ENCODE measurements at regions of chr1 and their contacts with region 1.

Region 1: GRCh38 chr1:111227851-111228747 is 586 bp downstream of the CHI3L2 start:
- DNase-seq: peak in 1 of 9 experiments; percentile 23
- ATAC-seq: no peak
- H3K4me3 ChIP-seq: peak overlapping the region in 1 of 2 experiments; percentile 5
- H3K4me3 Mint-ChIP-seq: peak overlapping the region; percentile 22
- H3K27ac ChIP-seq: peak overlapping the region; percentile 4 to 79
- H3K27ac Mint-ChIP-seq: peak overlapping the region; percentile 89
- H3K4me1 ChIP-seq: peaks cover 73% of the 10 kb centered on the region
- H3K4me1 Mint-ChIP-seq: peaks cover 81% of the 10 kb centered on the region
- H3K27me3 ChIP-seq: no peaks in the 10 kb centered on the region
- H3K27me3 Mint-ChIP-seq: no peaks in the 10 kb centered on the region
- CTCF ChIP-seq: no peak

Region 2: DNA sequence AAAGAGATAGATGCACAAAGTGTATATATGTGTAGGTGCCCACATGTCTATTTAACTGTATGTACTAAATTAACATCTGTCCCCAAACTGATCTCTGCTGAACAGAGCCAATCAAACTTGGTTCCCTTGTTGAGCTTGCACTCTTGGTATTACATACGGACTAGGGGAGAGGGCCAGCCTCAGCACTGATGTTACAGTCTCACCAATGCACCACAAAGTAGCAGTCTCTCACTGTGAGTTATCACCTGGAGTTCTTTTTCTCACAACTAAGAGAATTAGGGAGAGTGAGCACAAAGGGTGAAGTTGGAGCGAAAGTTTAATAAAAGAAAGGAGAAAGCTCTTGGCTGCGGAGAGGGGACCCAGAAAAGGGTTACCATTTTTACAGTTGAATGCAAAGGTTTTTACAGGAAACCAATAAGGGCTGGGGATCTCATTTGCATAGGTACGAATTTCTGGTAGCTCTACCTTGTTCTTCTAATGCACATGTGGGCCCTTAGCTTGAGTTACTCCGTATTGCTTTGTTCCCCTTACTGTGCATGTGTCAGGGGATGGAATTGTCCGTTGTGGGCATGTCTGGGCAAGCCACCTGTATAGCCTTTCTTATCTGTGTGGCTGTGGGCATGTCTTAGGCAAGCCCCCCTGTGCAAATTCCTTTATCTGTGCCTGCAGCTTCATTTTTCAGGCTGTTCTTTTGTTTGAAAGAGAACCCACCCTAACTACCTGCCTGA is 13.9 kb before region 1 on chr1:
- CTCF ChIA-PET with region 1: interaction called, 17 read pairs
- POLR2A ChIA-PET with region 1: interaction called, 16 read pairs
- intact Hi-C with region 1: loop called in 1 of 2 experiments (anchors 1 kb)
- DNase-seq: no peak
- ATAC-seq: no peak
- H3K4me3 ChIP-seq: peak overlapping the region in 1 of 2 experiments; percentile 26
- H3K4me3 Mint-ChIP-seq: peak overlapping the region; percentile 72
- H3K27ac ChIP-seq: peak overlapping the region; percentile 65 to 84
- H3K27ac Mint-ChIP-seq: peak overlapping the region; percentile 94
- H3K4me1 ChIP-seq: peaks cover 65% of the 10 kb centered on the region
- H3K4me1 Mint-ChIP-seq: peaks cover 90% of the 10 kb centered on the region
- H3K27me3 ChIP-seq: no peaks in the 10 kb centered on the region
- H3K27me3 Mint-ChIP-seq: no peaks in the 10 kb centered on the region
- CTCF ChIP-seq: no peak

Region 3: DNA sequence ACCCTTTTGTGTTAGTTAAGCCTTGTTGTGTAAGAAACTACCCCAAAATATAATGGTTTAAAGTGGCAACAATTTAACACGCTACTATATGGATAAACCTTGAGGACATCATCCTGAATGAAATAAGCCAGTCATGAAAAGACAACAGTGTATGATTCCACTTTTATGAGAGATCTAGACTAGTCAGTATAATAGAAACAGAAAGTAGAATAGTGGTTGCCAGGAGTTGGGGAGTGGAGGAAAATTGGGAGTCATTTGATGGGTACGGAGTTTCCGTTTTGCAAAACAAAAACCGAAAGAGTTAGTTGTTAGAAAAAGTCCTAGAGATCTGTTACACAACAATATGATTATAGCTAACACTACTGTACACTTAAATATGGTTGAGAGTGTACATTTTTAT is 46.6 kb after region 1 on chr1:
- CTCF ChIA-PET with region 1: interaction called, 5 read pairs
- POLR2A ChIA-PET with region 1: no interaction called
- intact Hi-C with region 1: loop called in 1 of 2 experiments (anchors 5 kb)
- DNase-seq: peak in 1 of 9 experiments; percentile 39
- ATAC-seq: no peak
- H3K4me3 ChIP-seq: no peak overlapping the region
- H3K4me3 Mint-ChIP-seq: no peak overlapping the region
- H3K27ac ChIP-seq: no peak overlapping the region
- H3K27ac Mint-ChIP-seq: peak overlapping the region; percentile 2
- H3K4me1 ChIP-seq: peaks cover 7% of the 10 kb centered on the region
- H3K4me1 Mint-ChIP-seq: peaks cover 13% of the 10 kb centered on the region
- H3K27me3 ChIP-seq: peaks cover 0 to 13% of the 10 kb centered on the region in 2 experiments
- H3K27me3 Mint-ChIP-seq: peaks cover 13% of the 10 kb centered on the region
- CTCF ChIP-seq: no peak

Region 4: DNA sequence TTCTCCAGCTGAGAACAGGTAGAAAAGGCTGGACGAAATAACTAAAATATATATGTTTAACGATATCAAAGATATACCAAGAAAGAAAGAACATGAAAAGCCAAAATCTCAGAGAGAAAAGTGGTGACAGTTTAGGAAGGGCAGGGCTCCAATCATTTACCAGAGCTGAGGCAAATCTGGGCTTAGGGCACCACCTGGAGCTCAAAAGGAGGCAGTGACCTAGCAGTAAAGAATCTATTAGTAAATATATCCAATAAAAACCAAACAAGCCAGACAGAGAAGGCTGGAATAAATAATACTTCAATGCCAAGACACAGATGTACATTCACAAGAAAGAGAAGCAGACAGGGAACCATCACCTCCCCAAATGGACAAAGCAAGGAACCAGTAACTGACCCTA is 106.1 kb after region 1 on chr1:
- CTCF ChIA-PET with region 1: interaction called, 34 read pairs
- POLR2A ChIA-PET with region 1: interaction called, 5 read pairs
- intact Hi-C with region 1: loop called (anchors 1 kb)
- DNase-seq: peak; percentile 19 to 82 (median 57)
- ATAC-seq: peak; percentile 87
- H3K4me3 ChIP-seq: no peak overlapping the region
- H3K4me3 Mint-ChIP-seq: no peak overlapping the region
- H3K27ac ChIP-seq: no peak overlapping the region
- H3K27ac Mint-ChIP-seq: no peak overlapping the region
- H3K4me1 ChIP-seq: no peaks in the 10 kb centered on the region
- H3K4me1 Mint-ChIP-seq: peaks cover 6% of the 10 kb centered on the region
- H3K27me3 ChIP-seq: no peaks in the 10 kb centered on the region
- H3K27me3 Mint-ChIP-seq: no peaks in the 10 kb centered on the region
- CTCF ChIP-seq: peak; percentile 73

Measured in CD8-positive, alpha-beta T cell (primary cell).